Common myeloid progenitor, CD34-positive (primary cell): ENCODE measurements at regions of chr6 and their contacts with region 1.

Region 1: DNA sequence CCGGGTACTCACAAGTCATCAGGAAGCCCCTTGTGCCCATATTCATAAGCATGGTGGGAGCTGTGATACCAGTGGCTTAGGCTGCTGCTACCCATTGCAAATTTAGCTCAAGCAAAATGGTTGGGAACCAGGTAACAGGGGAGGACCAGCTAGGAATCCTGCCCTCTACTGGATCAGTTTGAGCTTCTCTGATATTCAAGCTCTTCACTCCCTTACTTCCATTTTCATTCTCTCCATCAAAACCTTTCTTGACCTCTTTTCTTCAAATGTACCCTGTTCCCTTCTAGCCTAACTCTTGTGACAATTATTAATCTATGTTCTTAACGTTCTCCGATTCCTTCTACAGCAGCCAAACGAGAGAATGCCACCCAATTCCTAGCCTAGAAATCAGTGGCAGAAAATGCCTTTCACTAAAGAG is 9.7 kb downstream of the NOL7 start:
- DNase-seq: peak; percentile 70 to 85 (median 81)
- H3K4me3 ChIP-seq: no peak overlapping the region
- H3K27ac ChIP-seq: peak overlapping the region in 1 of 2 experiments; percentile 11
- H3K4me1 ChIP-seq: no peaks in the 10 kb centered on the region
- H3K27me3 ChIP-seq: no peaks in the 10 kb centered on the region

Region 2: GRCh38 chr6:13635948-13636658 is 11.2 kb after region 1 on chr6:
- CTCF ChIA-PET with region 1: interaction called, 21 read pairs
- POLR2A ChIA-PET with region 1: no interaction called
- DNase-seq: peak in 1 of 3 donors; percentile 25
- H3K4me3 ChIP-seq: peak overlapping the region in 1 of 7 experiments; percentile 11
- H3K27ac ChIP-seq: no peak overlapping the region
- H3K4me1 ChIP-seq: peaks cover 0 to 22% (median 8%) of the 10 kb centered on the region in 4 experiments
- H3K27me3 ChIP-seq: no peaks in the 10 kb centered on the region